ENCODE measurements at regions of chr7 and their contacts with region 1.

Region 1: DNA sequence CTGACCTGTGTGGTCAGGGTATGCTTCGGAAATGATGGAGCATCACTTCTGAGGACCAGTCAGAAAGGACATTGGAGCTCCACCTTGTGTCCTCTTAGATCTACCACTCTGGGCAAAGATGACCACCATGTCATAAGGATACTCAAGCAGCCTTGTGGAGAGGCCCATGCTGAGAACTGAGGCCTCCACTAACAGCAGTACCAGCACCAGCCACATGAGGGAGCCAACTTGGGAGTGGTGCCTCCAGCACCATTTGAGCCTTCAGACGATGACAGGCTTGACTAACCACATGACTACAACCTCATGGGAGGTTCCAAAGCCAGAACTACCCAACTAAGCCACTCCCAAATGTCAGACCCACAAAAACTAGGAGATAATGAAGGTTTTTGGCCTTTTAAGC is 116.0 kb downstream of the NPTX2 start:
- DNase-seq: peak; percentile 70
- CTCF ChIP-seq: peak; percentile 42

Region 2: DNA sequence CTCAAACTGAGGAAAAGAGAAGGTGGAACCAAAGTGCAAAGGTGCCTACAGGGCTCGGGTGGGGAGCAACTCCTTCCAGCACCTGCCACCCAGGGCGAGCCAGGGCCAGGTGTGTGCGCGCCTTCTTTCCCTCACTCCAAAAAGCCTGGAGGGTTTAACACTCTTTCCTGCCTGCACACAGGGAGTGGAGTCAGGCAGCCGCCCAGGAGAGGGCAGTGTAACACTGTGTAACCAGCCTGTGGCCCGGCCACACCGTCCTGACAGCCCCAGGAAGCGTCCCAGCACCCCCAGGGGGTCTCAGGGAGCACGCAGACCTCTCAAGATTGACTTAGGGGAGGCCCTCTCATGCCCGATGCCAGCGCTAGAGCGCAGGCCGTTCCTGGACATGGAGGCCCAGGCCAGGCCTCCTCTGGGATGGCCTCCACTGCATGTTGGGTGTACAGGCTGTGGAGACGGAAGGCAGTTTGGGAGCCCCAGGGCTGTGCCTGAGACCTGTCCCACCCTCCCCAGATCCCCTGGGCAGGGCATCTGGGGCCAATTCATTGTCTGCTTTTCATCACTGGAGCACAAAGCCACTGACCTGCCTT is 438.1 kb before region 1 on chr7:
- CTCF ChIA-PET with region 1: no interaction called
- POLR2A ChIA-PET with region 1: interaction called, 12 read pairs
- DNase-seq: peak; percentile 80
- CTCF ChIP-seq: peak; percentile 70

Measured in GM10248 (cell line).